Pancreas (tissue), 10 donors: ENCODE measurements at regions of chr1 and their contacts with region 1.

Region 1: GRCh38 chr1:30379684-30380624 is 343.4 kb downstream of the MATN1 start:
- DNase-seq: peak in 3 of 6 donors; percentile 49 to 67 (median 66)
- ATAC-seq: peak; percentile 84 to 97 (median 92)
- H3K4me3 ChIP-seq: no peak overlapping the region
- H3K27ac ChIP-seq: no peak overlapping the region
- H3K4me1 ChIP-seq: no peaks in the 10 kb centered on the region
- H3K27me3 ChIP-seq: no peaks in the 10 kb centered on the region
- CTCF ChIP-seq: peak; percentile 79 to 81 (median 80)

Region 2: DNA sequence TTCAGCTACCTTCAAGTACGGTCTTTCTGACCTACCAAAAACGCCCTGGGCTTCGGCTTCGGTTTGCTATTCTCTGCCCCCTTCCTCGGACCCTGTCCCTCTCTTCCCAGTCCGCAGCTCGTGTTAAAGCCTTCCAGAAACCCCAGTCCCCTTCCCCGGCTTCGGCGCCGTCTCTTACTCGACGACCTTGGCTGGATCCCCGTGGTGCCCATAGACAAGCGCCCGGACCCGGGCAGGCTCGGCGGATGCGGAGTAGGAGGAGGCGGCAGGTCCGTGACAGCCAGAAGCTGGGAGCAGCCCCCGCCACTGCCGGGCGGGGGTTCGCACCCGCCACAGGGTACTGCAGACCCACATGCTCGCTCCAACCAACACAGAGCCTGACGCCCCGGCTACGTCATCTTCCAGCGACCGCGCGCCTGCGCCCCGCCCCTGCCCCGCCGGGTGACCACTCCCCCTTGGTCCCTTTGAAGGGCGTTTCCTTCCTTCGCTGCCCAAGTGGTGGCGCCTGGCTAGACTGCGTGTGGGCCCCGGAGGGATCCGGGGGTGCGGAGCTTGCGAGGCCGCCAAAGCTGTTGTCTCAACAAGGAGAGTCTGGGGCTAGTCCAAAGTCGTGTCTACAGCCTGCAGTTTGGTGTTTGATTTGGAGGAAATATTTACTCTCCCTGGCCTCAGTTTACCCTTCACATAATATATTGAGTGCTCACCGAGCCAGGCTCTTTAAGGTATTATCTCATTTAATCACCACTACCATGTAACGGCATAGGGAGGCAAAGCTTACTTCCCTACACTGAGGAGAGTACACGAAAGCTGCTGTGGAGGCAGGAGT is 1149.2 kb before region 1 on chr1 and contains the start of gene MECR:
- intact Hi-C with region 1: loop called in 1 of 3 experiments (anchors 10 kb)
- DNase-seq: peak; percentile 90 to 98 (median 94)
- ATAC-seq: peak; percentile 98 to 99 (median 99)
- H3K4me3 ChIP-seq: peak within 1 kb of the TSS; percentile 60 to 87 (median 74)
- H3K27ac ChIP-seq: peak within 1 kb of the TSS; percentile 17 to 60 (median 50)
- H3K4me1 ChIP-seq: peaks cover 0 to 8% (median 7%) of the 10 kb centered on the region in 3 donors
- H3K27me3 ChIP-seq: no peaks in the 10 kb centered on the region
- CTCF ChIP-seq: no peak
- total RNA-seq, gene MECR: 9.0 to 13.0 (median 9.8) TPM

Region 3: DNA sequence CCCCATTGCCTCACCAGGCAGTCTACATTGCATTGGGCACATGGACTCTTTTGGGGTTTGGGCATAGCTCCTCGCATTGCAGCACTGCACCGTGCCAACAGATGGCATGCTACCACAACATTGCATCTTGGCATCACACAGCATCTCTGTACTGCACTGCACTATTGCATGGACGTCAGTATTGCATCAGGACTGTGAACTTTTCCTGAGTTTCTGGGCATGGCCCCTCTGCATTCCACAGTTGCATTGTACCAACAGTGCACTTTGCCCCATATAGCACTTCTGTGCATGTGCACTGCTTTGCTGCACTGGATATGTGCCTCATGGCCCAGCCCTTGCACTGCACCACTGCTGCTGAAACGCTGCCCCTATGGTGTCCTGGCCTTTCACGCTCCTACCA is 1134.1 kb before region 1 on chr1:
- intact Hi-C with region 1: loop called in 1 of 3 experiments (anchors 10 kb)
- DNase-seq: no peak
- ATAC-seq: peak in 3 of 4 donors; percentile 66 to 76 (median 66)
- H3K4me3 ChIP-seq: no peak overlapping the region
- H3K27ac ChIP-seq: no peak overlapping the region
- H3K4me1 ChIP-seq: no peaks in the 10 kb centered on the region
- H3K27me3 ChIP-seq: no peaks in the 10 kb centered on the region
- CTCF ChIP-seq: peak in 1 of 4 donors; percentile 17

Region 4: DNA sequence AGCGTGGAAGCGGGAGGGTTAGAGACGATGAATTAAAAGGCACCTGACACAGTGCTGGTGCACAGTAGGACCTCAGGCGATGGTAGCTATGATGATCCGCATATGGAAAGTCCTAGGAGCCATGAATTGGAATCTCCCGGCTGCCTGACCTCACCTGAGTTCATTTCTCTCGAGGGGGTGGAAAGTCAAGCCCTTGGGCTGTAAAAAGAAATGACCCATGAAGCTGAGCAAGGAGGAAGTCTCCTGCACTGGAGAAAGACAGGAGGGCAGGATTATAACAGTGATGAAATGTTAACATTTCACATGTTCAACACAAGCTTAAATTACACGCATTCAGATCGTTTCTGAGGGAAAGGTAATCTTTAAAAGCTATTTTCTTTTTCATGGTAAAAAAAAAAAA is 137.8 kb before region 1 on chr1:
- intact Hi-C with region 1: no loop called
- DNase-seq: no peak
- ATAC-seq: no peak
- H3K4me3 ChIP-seq: no peak overlapping the region
- H3K27ac ChIP-seq: no peak overlapping the region
- H3K4me1 ChIP-seq: no peaks in the 10 kb centered on the region
- H3K27me3 ChIP-seq: peaks cover 0 to 5% (median 0%) of the 10 kb centered on the region in 4 donors
- CTCF ChIP-seq: no peak